ENCODE measurements at regions of chr5 and their contacts with region 1.

Region 1: DNA sequence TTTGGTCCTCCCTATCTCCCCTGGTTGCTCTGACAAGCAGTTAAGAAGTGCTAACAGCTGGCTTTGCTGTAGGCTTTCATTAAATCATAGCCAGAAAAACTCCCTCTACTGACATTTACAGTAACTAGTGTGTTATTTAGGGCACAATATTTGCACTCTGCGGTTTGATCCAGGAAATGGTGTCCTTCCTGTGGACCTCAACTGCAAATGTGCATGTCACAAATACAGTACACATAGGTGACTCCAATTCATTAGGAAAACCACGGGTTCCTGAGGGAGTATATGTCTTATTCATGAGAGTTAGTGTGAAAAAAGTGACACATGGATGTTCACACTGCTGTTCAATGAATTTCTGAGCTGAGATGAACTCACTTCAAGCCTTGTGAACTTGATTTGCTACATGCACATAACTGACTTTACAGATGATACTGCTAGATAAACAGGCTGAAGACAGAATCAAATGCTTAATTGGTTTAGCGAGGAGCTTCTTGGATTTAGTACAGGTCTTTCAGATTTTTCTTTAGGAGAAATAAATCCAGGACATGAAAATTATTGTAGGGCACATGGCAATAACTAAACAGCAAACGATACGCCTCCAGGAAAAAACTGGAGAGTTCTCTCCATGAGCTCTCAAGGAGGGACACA is 281.5 kb downstream of the EFNA5 start:
- DNase-seq: peak in 2 of 9 donors; percentile 3 to 22
- ATAC-seq: peak; percentile 69
- H3K4me3 ChIP-seq: no peak overlapping the region
- H3K4me3 Mint-ChIP-seq: peak overlapping the region in 4 of 10 donors; percentile 2 to 74 (median 12)
- H3K27ac ChIP-seq: no peak overlapping the region
- H3K27ac Mint-ChIP-seq: peak overlapping the region in 1 of 9 donors; percentile 31
- H3K4me1 ChIP-seq: peaks cover 0 to 19% of the 10 kb centered on the region in 2 donors
- H3K4me1 Mint-ChIP-seq: peaks cover 19 to 28% (median 21%) of the 10 kb centered on the region in 7 donors
- H3K27me3 ChIP-seq: no peaks in the 10 kb centered on the region
- H3K27me3 Mint-ChIP-seq: peaks cover 0 to 4% (median 0%) of the 10 kb centered on the region in 5 donors

Region 2: GRCh38 chr5:107263387-107264018 is 125.7 kb before region 1 on chr5:
- CTCF ChIA-PET with region 1: no interaction called
- POLR2A ChIA-PET with region 1: no interaction called
- intact Hi-C with region 1: loop called in 1 of 2 experiments (anchors 5 kb)
- DNase-seq: peak in 1 of 9 donors; percentile 11
- ATAC-seq: peak; percentile 57
- H3K4me3 ChIP-seq: no peak overlapping the region
- H3K4me3 Mint-ChIP-seq: peak overlapping the region in 2 of 10 donors; percentile 11 to 33
- H3K27ac ChIP-seq: no peak overlapping the region
- H3K27ac Mint-ChIP-seq: no peak overlapping the region
- H3K4me1 ChIP-seq: no peaks in the 10 kb centered on the region
- H3K4me1 Mint-ChIP-seq: no peaks in the 10 kb centered on the region
- H3K27me3 ChIP-seq: no peaks in the 10 kb centered on the region
- H3K27me3 Mint-ChIP-seq: peaks cover 0 to 16% (median 0%) of the 10 kb centered on the region in 5 donors

Region 3: GRCh38 chr5:107365320-107366109 is 23.7 kb before region 1 on chr5:
- CTCF ChIA-PET with region 1: no interaction called
- POLR2A ChIA-PET with region 1: no interaction called
- intact Hi-C with region 1: no loop called
- DNase-seq: no peak
- ATAC-seq: peak; percentile 74
- H3K4me3 ChIP-seq: no peak overlapping the region
- H3K4me3 Mint-ChIP-seq: peak overlapping the region in 1 of 10 donors; percentile 4
- H3K27ac ChIP-seq: no peak overlapping the region
- H3K27ac Mint-ChIP-seq: no peak overlapping the region
- H3K4me1 ChIP-seq: peaks cover 0 to 13% of the 10 kb centered on the region in 2 donors
- H3K4me1 Mint-ChIP-seq: peaks cover 0 to 17% (median 6%) of the 10 kb centered on the region in 7 donors
- H3K27me3 ChIP-seq: no peaks in the 10 kb centered on the region
- H3K27me3 Mint-ChIP-seq: peaks cover 0 to 6% (median 4%) of the 10 kb centered on the region in 5 donors